ENCODE measurements at regions of chr6 and their contacts with region 1.

Region 1: GRCh38 chr6:30357678-30358540 is 13.0 kb downstream of the RPP21 start:
- H3K4me3 ChIP-seq: peak overlapping the region; percentile 53
- H3K27ac ChIP-seq: no peak overlapping the region
- H3K4me1 ChIP-seq: no peaks in the 10 kb centered on the region
- CTCF ChIP-seq: peak; percentile 74

Region 2: GRCh38 chr6:30238174-30238795 is 119.6 kb before region 1 on chr6:
- CTCF ChIA-PET with region 1: interaction called, 16 read pairs
- POLR2A ChIA-PET with region 1: no interaction called
- H3K4me3 ChIP-seq: no peak overlapping the region
- H3K27ac ChIP-seq: no peak overlapping the region
- H3K4me1 ChIP-seq: no peaks in the 10 kb centered on the region
- CTCF ChIP-seq: peak; percentile 56

Region 3: GRCh38 chr6:30263734-30264133 is 94.2 kb before region 1 on chr6:
- CTCF ChIA-PET with region 1: no interaction called
- POLR2A ChIA-PET with region 1: no interaction called
- H3K4me3 ChIP-seq: no peak overlapping the region
- H3K27ac ChIP-seq: no peak overlapping the region
- H3K4me1 ChIP-seq: peaks cover 8% of the 10 kb centered on the region; the same call in 1 of the 2 replicates
- CTCF ChIP-seq: no peak

Region 4: DNA sequence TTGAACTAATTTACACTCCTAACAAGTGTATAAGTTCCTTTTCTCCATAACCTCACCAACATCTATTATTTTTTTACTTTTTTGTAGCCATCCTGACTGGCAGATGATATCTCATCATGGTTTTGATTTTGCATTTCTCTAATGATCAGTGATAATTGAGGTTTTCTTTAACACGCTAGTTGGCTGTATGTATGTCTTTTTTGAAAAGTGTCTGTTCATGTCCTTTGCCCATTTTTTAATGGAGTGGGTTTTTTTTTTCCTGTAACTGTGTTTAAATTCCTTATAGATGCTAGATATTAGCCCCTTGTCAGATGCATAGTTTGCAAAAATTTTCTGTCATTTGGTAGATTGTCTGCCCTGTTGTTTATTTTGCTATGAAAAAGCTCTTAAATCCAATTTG is 70.8 kb before region 1 on chr6:
- CTCF ChIA-PET with region 1: interaction called, 11 read pairs
- POLR2A ChIA-PET with region 1: no interaction called
- H3K4me3 ChIP-seq: no peak overlapping the region
- H3K27ac ChIP-seq: no peak overlapping the region
- H3K4me1 ChIP-seq: no peaks in the 10 kb centered on the region
- CTCF ChIP-seq: no peak

Region 5: GRCh38 chr6:30378290-30378937 is 20.5 kb after region 1 on chr6:
- CTCF ChIA-PET with region 1: interaction called, 10 read pairs
- POLR2A ChIA-PET with region 1: no interaction called
- H3K4me3 ChIP-seq: no peak overlapping the region
- H3K27ac ChIP-seq: no peak overlapping the region
- H3K4me1 ChIP-seq: no peaks in the 10 kb centered on the region
- CTCF ChIP-seq: no peak

Region 6: GRCh38 chr6:30396833-30397479 is 39.0 kb after region 1 on chr6:
- CTCF ChIA-PET with region 1: interaction called, 41 read pairs
- POLR2A ChIA-PET with region 1: no interaction called
- H3K4me3 ChIP-seq: no peak overlapping the region
- H3K27ac ChIP-seq: no peak overlapping the region
- H3K4me1 ChIP-seq: no peaks in the 10 kb centered on the region
- CTCF ChIP-seq: peak; percentile 89

Region 7: GRCh38 chr6:30405934-30406333 is 48.0 kb after region 1 on chr6:
- CTCF ChIA-PET with region 1: interaction called, 10 read pairs
- POLR2A ChIA-PET with region 1: no interaction called
- H3K4me3 ChIP-seq: no peak overlapping the region
- H3K27ac ChIP-seq: no peak overlapping the region
- H3K4me1 ChIP-seq: no peaks in the 10 kb centered on the region
- CTCF ChIP-seq: no peak

Measured in HEK293 (cell line).